Activated T-helper 1 cell treated with anti-CD3 and anti-CD28 coated beads, Interleukin-12 subunit alpha, Interleukin-12 subunit beta, Interleukin-2, Interleukin-4 antibody, amounts not matched to agents 30 ng/mL and 10 ng/mL and 1 ng/mL, durations not matched to agents 14 hours and 24 hours and 36 hours (primary cell): ENCODE measurements at regions of chr16 and their contacts with region 1.

Region 1: DNA sequence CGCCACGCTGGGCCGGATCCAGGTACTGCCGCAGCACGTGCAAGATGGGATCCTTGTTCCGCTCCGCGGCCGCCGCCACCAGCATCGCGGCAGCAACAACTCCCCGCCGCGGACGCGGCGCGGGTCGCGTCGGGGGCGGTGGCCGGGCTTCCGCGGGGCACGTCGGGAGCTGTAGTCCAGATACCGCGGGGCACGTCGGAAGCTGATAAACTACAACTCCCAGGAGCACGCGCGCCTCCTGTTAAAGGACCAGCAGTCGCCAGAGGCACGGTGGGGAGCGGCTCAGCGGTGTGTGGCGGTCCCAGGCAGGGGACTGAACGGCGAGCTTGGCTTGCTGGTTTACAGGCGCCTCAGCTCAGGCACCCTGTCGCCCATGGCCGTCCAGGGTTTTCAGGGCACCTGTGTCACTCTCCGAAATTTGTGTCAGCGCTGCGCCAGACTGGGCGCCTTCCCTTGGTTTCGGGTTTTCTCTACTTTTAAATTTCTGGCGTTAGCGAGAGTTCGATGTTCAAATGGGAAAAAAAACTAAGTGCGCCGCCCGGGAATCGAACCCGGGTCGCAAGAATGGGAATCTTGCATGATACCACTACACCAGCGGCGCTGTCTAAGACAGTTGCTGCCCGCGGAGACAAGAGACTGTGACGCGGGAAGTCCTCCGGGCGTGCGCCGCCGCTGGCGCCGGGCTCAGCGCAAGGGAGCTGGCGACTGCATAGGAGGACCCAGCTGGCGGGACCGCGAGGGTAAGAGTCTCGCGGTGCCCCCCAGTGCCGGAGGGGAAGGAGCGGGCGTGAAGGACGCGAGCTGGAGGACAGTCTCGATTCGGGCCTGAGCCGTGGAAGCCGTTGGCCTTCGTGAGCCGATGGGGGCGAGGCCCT is at the start of gene METTL26:
- DNase-seq: peak; percentile 91
- H3K4me3 Mint-ChIP-seq: peak within 1 kb of the TSS; percentile 85
- H3K27ac Mint-ChIP-seq: peak within 1 kb of the TSS; percentile 91
- H3K4me1 Mint-ChIP-seq: peaks cover 6% of the 10 kb centered on the region
- H3K27me3 Mint-ChIP-seq: no peaks in the 10 kb centered on the region
- total RNA-seq, gene METTL26: 141 and 147 TPM in 2 replicates

Region 2: GRCh38 chr16:381789-382717 is 254.4 kb before region 1 on chr16 and contains the start of gene PGAP6:
- intact Hi-C with region 1: loop called (anchors 5 kb)
- DNase-seq: peak; percentile 55
- H3K4me3 Mint-ChIP-seq: peak within 1 kb of the TSS; percentile 82
- H3K27ac Mint-ChIP-seq: peak within 1 kb of the TSS; percentile 58
- H3K4me1 Mint-ChIP-seq: peaks cover 7% of the 10 kb centered on the region
- H3K27me3 Mint-ChIP-seq: peaks cover 14% of the 10 kb centered on the region
- total RNA-seq, gene PGAP6: 35.7 and 36.3 TPM in 2 replicates

Region 3: GRCh38 chr16:527006-527753 is 109.3 kb before region 1 on chr16 and contains the start of gene CAPN15:
- intact Hi-C with region 1: loop called (anchors 1 kb)
- DNase-seq: peak; percentile 84
- H3K4me3 Mint-ChIP-seq: peak within 1 kb of the TSS; percentile 95
- H3K27ac Mint-ChIP-seq: peak within 1 kb of the TSS; percentile 94
- H3K4me1 Mint-ChIP-seq: peaks cover 9% of the 10 kb centered on the region
- H3K27me3 Mint-ChIP-seq: no peaks in the 10 kb centered on the region
- total RNA-seq, gene CAPN15: 122 and 124 TPM in 2 replicates

Region 4: GRCh38 chr16:648781-649589 is 12.5 kb after region 1 on chr16 and contains the start of gene WDR90:
- intact Hi-C with region 1: loop called (anchors 1 kb)
- DNase-seq: peak; percentile 92
- H3K4me3 Mint-ChIP-seq: peak within 1 kb of the TSS; percentile 84
- H3K27ac Mint-ChIP-seq: peak within 1 kb of the TSS; percentile 68
- H3K4me1 Mint-ChIP-seq: no peaks in the 10 kb centered on the region
- H3K27me3 Mint-ChIP-seq: no peaks in the 10 kb centered on the region
- total RNA-seq, gene WDR90: 81.2 and 82.3 TPM in 2 replicates

Region 5: DNA sequence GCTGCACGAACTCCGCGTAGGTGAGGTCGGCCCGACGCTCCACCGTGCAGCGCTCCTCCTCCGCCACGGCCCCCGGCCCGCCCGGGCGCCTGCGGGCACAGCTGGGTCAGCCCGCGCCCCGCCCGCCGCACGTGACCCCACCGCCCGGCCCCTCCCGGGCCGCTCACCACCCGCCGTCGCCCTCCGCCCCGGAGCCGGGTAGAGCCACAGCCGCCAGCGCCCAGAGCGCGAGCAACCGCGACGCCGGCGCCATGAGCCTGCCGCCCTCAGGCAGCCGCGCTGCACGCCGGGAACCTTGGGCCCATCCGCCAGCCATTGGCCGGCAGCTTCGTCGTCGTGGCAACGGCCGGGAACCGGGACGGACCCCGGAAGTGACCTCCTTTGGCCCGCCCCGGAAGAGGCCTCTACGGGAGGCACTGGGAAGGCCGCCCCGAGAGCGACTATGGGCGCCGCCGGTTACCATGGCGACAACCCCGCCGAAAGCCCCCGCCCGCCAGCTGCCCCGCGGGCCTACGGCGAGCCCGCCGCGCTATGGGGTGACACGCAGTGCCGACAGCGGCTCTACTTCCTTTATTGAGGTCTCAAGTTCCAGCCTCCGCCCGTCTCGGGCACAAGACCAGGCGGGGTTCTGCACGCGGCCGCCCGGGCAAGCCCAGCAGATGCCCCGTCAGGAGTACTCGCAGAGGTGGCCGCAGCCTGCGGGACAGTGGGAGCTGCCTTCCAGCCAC is 47.8 kb after region 1 on chr16 and contains the start of gene JMJD8:
- intact Hi-C with region 1: loop called (anchors 1 kb)
- DNase-seq: peak; percentile 97
- H3K4me3 Mint-ChIP-seq: peak within 1 kb of the TSS; percentile 83
- H3K27ac Mint-ChIP-seq: peak within 1 kb of the TSS; percentile 58
- H3K4me1 Mint-ChIP-seq: peaks cover 5% of the 10 kb centered on the region
- H3K27me3 Mint-ChIP-seq: no peaks in the 10 kb centered on the region
- total RNA-seq, gene JMJD8: 63.4 and 71.4 TPM in 2 replicates